ENCODE measurements at regions of chr10 and their contacts with region 1.

Region 1: GRCh38 chr10:12068449-12069269 is at the start of gene DHTKD1:
- DNase-seq: peak; percentile 99
- H3K4me3 Mint-ChIP-seq: peak within 1 kb of the TSS; percentile 81
- H3K27ac Mint-ChIP-seq: peak within 1 kb of the TSS; percentile 82
- H3K4me1 Mint-ChIP-seq: peaks cover 22% of the 10 kb centered on the region
- H3K27me3 Mint-ChIP-seq: no peaks in the 10 kb centered on the region
- total RNA-seq, gene DHTKD1: 16.2 to 17.1 TPM

Region 2: DNA sequence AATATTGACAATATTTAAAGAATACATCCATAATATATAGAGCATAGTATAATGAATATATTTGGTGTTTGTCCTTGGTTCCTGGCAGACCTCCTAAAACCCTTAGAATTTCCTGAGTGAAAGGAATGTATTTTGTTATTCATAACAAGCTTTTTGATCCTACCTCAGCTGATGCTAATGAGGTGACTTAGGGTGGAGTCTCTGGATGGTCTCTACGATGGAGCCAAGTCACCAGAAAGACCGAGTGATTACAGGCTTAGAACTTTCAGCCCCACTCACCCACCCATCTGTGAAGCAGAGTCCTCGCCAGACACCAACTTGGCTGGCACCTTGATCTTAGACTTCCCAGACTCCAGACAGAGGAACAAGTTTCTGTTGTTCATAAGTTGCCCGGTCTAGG is 62.0 kb before region 1 on chr10:
- CTCF ChIA-PET with region 1: no interaction called
- POLR2A ChIA-PET with region 1: no interaction called
- intact Hi-C with region 1: no loop called
- DNase-seq: no peak
- H3K4me3 Mint-ChIP-seq: no peak overlapping the region
- H3K27ac Mint-ChIP-seq: no peak overlapping the region
- H3K4me1 Mint-ChIP-seq: peaks cover 16% of the 10 kb centered on the region
- H3K27me3 Mint-ChIP-seq: no peaks in the 10 kb centered on the region

Region 3: DNA sequence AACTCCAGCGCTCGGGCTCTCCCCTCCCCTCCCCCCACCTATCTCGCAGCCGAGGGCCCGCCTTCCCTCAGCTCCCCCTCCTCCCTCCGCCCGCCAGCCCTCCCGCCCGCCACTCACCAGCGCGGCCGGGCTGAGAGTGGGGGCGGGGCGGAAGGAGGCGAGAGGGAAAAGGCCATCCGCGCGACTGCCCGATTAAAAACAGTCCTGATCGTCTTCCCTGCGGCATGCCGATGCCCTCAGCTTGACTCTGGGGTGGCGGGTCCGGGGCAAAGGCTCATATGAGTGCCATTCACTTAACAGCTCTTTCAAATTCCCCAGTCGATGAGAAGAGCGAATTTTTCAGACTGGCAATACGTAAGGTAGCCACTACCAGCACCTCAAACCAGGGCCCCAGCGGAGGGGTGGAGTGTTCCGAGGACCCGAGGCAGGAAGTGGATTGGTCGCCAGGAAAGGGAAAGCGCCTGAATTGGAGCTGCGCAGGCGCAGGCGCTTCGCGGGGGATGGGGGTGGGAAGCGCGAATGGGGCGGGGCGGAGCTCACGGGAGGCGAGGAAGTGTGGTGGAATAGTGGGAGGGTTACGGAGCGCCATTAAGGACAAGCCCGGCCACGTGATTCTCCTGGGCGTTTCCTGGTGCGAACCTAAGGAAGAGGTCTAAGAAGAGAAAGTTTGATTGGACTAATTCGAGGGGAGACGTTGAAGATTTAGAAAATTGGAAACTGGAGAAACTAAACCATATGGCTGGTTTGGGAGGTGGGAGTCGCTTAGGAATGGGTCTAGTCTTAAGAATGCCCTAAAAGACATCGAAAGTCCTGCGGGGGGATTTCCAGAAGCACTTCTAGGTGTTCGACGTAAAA is 25.6 kb before region 1 on chr10 and contains the start of gene UPF2:
- CTCF ChIA-PET with region 1: interaction called, 6 read pairs
- POLR2A ChIA-PET with region 1: interaction called, 5 read pairs
- intact Hi-C with region 1: loop called (anchors 1 kb)
- DNase-seq: peak; percentile 99
- H3K4me3 Mint-ChIP-seq: peak within 1 kb of the TSS; percentile 100
- H3K27ac Mint-ChIP-seq: peak within 1 kb of the TSS; percentile 98
- H3K4me1 Mint-ChIP-seq: peaks cover 32% of the 10 kb centered on the region
- H3K27me3 Mint-ChIP-seq: no peaks in the 10 kb centered on the region
- total RNA-seq, gene UPF2: 29.5 to 32.0 TPM

Region 4: DNA sequence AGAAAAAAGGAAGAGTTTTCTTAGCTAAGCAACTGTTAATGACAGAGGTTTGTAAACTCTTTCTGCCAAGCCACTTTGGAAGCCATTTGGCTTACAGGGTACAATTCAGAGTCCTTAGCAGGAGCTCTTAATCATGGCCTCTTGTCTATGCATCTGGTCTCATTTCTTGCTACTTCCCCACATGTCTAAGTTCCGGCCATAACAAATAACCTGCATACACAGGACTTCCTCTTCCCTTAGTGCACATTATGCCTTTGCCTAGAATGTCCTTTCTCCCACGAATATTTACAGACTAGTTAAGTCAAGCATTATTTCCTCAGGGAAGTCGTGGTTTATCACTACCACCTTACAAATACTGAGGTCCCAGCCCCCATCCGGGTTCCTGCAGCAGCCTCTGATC is 17.4 kb before region 1 on chr10:
- CTCF ChIA-PET with region 1: interaction called, 3 read pairs
- POLR2A ChIA-PET with region 1: no interaction called
- intact Hi-C with region 1: loop called (anchors 1 kb)
- DNase-seq: no peak
- H3K4me3 Mint-ChIP-seq: no peak overlapping the region
- H3K27ac Mint-ChIP-seq: no peak overlapping the region
- H3K4me1 Mint-ChIP-seq: peaks cover 8% of the 10 kb centered on the region
- H3K27me3 Mint-ChIP-seq: no peaks in the 10 kb centered on the region

Region 5: DNA sequence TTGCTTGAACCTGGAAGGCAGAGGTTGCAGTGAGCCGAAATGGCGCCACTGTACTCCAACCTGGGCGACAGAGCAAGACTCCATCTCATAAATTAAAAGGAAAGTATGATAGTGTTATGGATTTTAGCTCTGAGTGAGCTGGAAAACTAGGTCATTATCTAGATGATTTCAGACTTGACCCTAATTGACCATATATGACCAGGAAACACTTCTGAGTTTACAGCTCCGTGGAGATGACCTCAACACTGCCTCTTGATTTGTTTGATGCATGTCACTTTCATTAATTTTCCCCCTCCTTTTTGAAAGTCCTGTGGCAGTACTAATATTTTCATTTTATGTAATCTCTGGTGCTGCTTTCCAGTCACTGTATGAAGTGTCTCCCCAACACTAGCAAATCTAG is 53.0 kb after region 1 on chr10:
- CTCF ChIA-PET with region 1: no interaction called
- POLR2A ChIA-PET with region 1: interaction called, 3 read pairs
- intact Hi-C with region 1: loop called (anchors 1 kb)
- DNase-seq: no peak
- H3K4me3 Mint-ChIP-seq: peak overlapping the region; percentile 64
- H3K27ac Mint-ChIP-seq: peak overlapping the region; percentile 97
- H3K4me1 Mint-ChIP-seq: peaks cover 33% of the 10 kb centered on the region
- H3K27me3 Mint-ChIP-seq: no peaks in the 10 kb centered on the region

Region 6: GRCh38 chr10:12129222-12130111 is 60.8 kb after region 1 on chr10 and contains the start of gene SEC61A2:
- CTCF ChIA-PET with region 1: no interaction called
- POLR2A ChIA-PET with region 1: no interaction called
- intact Hi-C with region 1: loop called (anchors 2 kb)
- DNase-seq: peak; percentile 98
- H3K4me3 Mint-ChIP-seq: peak within 1 kb of the TSS; percentile 83
- H3K27ac Mint-ChIP-seq: peak within 1 kb of the TSS; percentile 74
- H3K4me1 Mint-ChIP-seq: peaks cover 31% of the 10 kb centered on the region
- H3K27me3 Mint-ChIP-seq: no peaks in the 10 kb centered on the region
- total RNA-seq, gene SEC61A2: 14.4 to 14.6 TPM

Measured in activated CD4-positive, alpha-beta memory T cell treated with anti-CD3 and anti-CD28 coated beads for 36 hours (primary cell).